MCF 10A (cell line): ENCODE measurements at regions of chr3 and their contacts with region 1.

Region 1: DNA sequence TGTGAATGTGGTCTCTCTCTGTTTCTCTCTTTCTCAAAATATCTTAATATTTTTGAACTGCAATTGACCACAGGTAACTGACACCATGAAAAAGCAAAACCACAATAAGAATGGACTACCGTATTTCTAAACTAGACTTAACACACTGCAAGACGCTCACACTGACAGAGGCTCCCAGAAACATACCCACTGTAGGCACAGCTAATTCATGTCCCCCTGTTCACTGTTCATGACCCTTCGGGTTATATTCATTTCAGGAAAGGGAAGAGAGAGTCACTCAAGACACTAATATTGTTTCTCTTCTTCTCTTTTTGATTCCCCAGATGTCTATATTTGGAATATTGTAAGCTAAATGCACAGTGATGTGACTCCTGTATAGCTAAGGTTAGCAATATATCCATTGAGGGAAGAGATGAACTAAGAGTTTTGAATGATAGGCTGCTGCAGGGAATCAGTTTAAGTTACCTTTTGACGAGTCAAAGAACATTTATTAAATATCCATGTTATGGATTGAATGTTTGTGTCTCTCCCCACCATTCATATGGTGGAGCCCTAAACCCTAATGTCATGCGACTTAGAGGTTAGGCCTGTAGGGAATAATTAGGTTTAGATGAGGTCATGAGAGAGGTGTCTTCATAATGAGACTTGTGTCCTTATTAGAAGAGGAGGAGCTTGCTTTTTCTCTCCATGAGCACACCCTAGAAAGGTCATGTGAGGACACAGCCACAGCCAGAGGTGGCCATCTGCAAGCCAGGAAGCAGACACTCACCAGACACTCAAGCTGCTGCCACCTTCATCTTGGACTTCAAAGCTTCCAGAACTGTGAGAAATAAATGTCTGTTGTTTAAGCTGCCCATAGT is 216.6 kb upstream of the GRM7 start:
- DNase-seq: no peak
- H3K4me3 Mint-ChIP-seq: no peak overlapping the region
- H3K27ac Mint-ChIP-seq: no peak overlapping the region
- H3K4me1 Mint-ChIP-seq: no peaks in the 10 kb centered on the region
- H3K27me3 Mint-ChIP-seq: no peaks in the 10 kb centered on the region
- CTCF ChIP-seq: no peak

Region 2: DNA sequence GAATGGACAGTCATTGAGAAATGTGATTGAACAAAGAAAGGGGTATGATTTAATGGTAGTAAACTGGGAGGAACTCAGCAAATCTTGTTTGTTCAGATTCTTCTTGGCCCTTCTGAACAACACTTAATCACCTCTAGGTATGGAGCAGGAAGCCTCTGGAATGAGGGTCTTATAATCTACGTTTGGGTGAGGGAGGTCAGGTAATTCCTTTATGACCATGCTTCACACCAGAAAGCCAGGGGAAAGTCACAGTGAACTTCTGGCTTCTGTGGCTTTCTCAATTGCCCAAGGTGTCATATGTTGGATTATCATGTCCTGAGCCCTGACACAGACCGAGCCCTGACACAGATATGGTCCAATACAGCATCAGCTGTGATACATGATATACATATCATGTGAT is 24.0 kb before region 1 on chr3:
- CTCF ChIA-PET with region 1: no interaction called
- POLR2A ChIA-PET with region 1: no interaction called
- intact Hi-C with region 1: no loop called
- DNase-seq: no peak
- H3K4me3 Mint-ChIP-seq: no peak overlapping the region
- H3K27ac Mint-ChIP-seq: no peak overlapping the region
- H3K4me1 Mint-ChIP-seq: no peaks in the 10 kb centered on the region
- H3K27me3 Mint-ChIP-seq: no peaks in the 10 kb centered on the region
- CTCF ChIP-seq: no peak

Region 3: DNA sequence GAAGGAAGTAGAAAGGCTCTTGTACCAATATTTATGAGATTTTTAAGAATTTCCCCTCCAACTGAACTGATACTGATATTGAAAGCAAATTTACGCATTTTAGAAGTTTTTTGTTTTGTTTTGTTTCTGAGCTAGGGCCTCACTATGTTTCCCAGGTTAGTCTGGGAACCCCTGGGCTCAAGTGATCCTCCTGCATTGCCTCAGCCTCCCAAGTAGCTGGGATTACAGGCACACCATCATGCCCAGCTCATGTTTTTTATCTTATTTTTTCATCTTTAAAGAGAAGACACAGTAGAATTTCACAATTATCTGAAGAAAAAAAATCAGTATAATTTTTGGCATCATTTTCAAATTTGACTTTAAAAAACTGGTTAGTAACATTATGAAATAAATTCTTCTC is 13.5 kb before region 1 on chr3:
- CTCF ChIA-PET with region 1: interaction called, 10 read pairs
- POLR2A ChIA-PET with region 1: interaction called, 4 read pairs
- intact Hi-C with region 1: no loop called
- DNase-seq: no peak
- H3K4me3 Mint-ChIP-seq: no peak overlapping the region
- H3K27ac Mint-ChIP-seq: no peak overlapping the region
- H3K4me1 Mint-ChIP-seq: no peaks in the 10 kb centered on the region
- H3K27me3 Mint-ChIP-seq: no peaks in the 10 kb centered on the region
- CTCF ChIP-seq: no peak